Activated CD8-positive, alpha-beta T cell treated with anti-CD3 and anti-CD28 coated beads, Interleukin-2, amount 10 ng/mL, durations not matched to agents 7 days and 5 days (primary cell): ENCODE measurements at regions of chr20 and their contacts with region 1.

Region 1: GRCh38 chr20:35741892-35742740 is at the start of gene RBM39:
- DNase-seq: peak; percentile 100
- ATAC-seq: peak; percentile 89
- H3K4me3 Mint-ChIP-seq: peak within 1 kb of the TSS; percentile 96
- H3K27ac Mint-ChIP-seq: peak within 1 kb of the TSS; percentile 100
- H3K4me1 Mint-ChIP-seq: peaks cover 39% of the 10 kb centered on the region
- H3K27me3 Mint-ChIP-seq: no peaks in the 10 kb centered on the region
- total RNA-seq, gene RBM39: 333 to 358 TPM

Region 2: DNA sequence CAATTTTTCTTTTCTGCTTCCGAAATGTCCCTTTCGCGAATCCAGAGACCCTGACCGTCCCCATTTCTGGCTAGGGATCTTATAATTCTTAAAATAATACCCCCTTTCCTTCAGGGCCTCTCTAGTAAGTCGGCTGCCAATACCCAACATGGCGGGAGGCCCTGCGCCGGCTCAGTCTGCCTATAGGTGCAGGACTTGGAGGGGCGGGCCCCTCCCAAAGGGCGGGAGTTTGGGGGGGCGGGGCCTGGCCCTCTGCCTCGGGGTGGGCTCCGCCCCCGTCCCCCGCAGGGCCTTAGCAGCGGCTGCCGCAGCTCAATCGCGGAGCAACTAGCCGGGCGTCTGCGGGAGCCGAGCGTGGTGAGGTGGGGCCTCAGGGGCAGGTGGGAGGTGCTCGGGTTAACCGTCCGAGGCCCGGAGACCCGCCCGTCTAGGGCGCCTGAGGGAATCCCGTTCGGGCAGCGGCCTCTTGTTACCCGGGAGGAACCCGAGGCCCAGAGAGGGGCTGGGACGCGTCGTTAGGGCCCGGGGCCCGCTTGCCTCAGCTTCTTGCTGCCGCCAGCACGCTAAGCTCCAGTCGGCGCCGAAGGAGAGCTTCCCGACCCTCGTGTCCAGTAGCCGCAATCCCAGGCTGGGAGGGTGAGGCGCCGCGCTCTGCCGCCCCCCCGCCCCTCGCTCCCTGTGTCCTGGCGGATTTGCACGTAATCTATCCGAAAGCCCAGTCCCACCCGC is 287.1 kb before region 1 on chr20 and contains the start of gene CEP250:
- CTCF ChIA-PET with region 1: no interaction called
- POLR2A ChIA-PET with region 1: interaction called, 14 read pairs
- DNase-seq: peak; percentile 96
- ATAC-seq: peak; percentile 98
- H3K4me3 Mint-ChIP-seq: peak within 1 kb of the TSS; percentile 89
- H3K27ac Mint-ChIP-seq: peak within 1 kb of the TSS; percentile 98
- H3K4me1 Mint-ChIP-seq: peaks cover 33% of the 10 kb centered on the region
- H3K27me3 Mint-ChIP-seq: no peaks in the 10 kb centered on the region
- total RNA-seq, gene CEP250: 72.1 to 74.5 TPM

Region 3: GRCh38 chr20:35619196-35620095 is 122.7 kb before region 1 on chr20:
- CTCF ChIA-PET with region 1: interaction called, 4 read pairs
- POLR2A ChIA-PET with region 1: interaction called, 27 read pairs
- DNase-seq: peak; percentile 83
- ATAC-seq: peak; percentile 41
- H3K4me3 Mint-ChIP-seq: peak overlapping the region; percentile 84
- H3K27ac Mint-ChIP-seq: peak overlapping the region; percentile 81
- H3K4me1 Mint-ChIP-seq: peaks cover 37% of the 10 kb centered on the region
- H3K27me3 Mint-ChIP-seq: peaks cover 1% of the 10 kb centered on the region

Region 4: GRCh38 chr20:35699127-35699975 is 42.8 kb before region 1 on chr20 and contains the starts of genes NFS1 and ROMO1:
- CTCF ChIA-PET with region 1: interaction called, 5 read pairs
- POLR2A ChIA-PET with region 1: interaction called, 36 read pairs
- DNase-seq: peak; percentile 91
- ATAC-seq: peak; percentile 88
- H3K4me3 Mint-ChIP-seq: peak within 1 kb of the TSS; percentile 84
- H3K27ac Mint-ChIP-seq: peak within 1 kb of the TSS; percentile 99
- H3K4me1 Mint-ChIP-seq: peaks cover 49% of the 10 kb centered on the region
- H3K27me3 Mint-ChIP-seq: no peaks in the 10 kb centered on the region
- total RNA-seq, gene NFS1: 32.7 to 34.7 TPM
- total RNA-seq, gene ROMO1: 134 to 143 TPM

Region 5: GRCh38 chr20:35756404-35756803 is 14.3 kb after region 1 on chr20:
- CTCF ChIA-PET with region 1: interaction called, 5 read pairs
- POLR2A ChIA-PET with region 1: interaction called, 22 read pairs
- DNase-seq: no peak
- ATAC-seq: no peak
- H3K4me3 Mint-ChIP-seq: no peak overlapping the region
- H3K27ac Mint-ChIP-seq: no peak overlapping the region
- H3K4me1 Mint-ChIP-seq: peaks cover 4% of the 10 kb centered on the region
- H3K27me3 Mint-ChIP-seq: peaks cover 6% of the 10 kb centered on the region

Region 6: DNA sequence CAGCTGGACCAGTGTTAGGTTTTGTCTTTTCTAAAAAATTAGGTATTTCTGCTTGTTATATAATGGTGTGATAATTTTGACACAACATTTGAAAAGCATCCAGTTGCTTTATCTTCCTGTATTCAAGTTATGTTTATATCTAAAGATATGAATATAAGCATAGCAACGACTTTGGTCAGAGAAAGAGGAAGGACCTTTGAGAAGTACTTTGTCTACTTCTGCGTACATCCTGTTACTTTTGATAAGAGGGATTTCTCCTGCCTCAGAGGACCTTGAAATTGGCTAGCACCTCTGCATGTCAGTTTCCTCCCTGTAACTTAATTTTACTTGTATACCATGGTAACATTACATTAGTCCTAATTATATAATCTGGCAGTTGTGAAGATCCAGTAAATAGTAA is 54.5 kb after region 1 on chr20:
- CTCF ChIA-PET with region 1: interaction called, 7 read pairs
- POLR2A ChIA-PET with region 1: interaction called, 13 read pairs
- DNase-seq: no peak
- ATAC-seq: peak; percentile 67
- H3K4me3 Mint-ChIP-seq: no peak overlapping the region
- H3K27ac Mint-ChIP-seq: peak overlapping the region; percentile 73
- H3K4me1 Mint-ChIP-seq: peaks cover 19% of the 10 kb centered on the region
- H3K27me3 Mint-ChIP-seq: no peaks in the 10 kb centered on the region

Region 7: DNA sequence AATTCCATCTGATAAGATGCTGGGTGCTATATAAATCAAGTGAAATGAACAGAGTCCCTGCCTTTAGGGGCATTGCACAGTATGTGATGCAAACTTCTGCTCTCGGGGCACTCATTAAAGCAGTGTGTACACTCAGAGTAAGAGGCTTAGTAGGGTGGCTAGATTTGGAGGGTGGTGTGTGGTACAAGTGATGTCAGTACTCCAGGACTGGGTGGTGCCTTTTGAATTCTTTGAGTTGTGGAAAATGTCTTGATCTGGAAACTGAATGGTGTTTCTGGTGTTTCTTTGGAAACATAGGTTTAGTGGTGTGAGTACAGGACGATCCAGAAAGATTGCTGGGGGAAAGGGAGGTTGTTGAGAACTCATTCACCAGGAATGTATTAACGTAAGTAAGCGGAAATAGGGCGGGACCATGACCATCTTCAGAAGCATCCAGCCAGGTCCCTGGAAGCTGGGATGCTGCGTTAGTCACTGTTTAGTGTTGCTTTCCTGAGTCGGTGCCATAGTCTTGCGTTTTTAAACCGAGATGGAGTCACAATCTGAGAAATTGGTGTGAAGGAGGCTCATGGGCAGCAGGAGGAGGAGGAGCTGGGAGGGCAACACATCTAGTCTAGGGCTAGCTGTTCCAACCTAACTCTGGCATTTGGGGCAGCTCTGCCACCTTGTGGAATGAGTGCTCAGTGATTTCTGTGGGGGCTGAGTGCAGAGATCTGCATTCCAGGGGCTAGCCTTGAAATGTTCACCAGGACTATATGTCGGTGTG is 141.8 kb after region 1 on chr20:
- CTCF ChIA-PET with region 1: interaction called, 3 read pairs
- POLR2A ChIA-PET with region 1: interaction called, 10 read pairs
- DNase-seq: peak; percentile 74
- ATAC-seq: peak; percentile 90
- H3K4me3 Mint-ChIP-seq: no peak overlapping the region
- H3K27ac Mint-ChIP-seq: no peak overlapping the region
- H3K4me1 Mint-ChIP-seq: peaks cover 9% of the 10 kb centered on the region
- H3K27me3 Mint-ChIP-seq: no peaks in the 10 kb centered on the region